Activated CD4-positive, alpha-beta T cell treated with anti-CD3 and anti-CD28 coated beads for 36 hours (primary cell): ENCODE measurements at regions of chr16 and their contacts with region 1.

Region 1: GRCh38 chr16:53743149-53743566 is 39.2 kb downstream of the FTO start:
- DNase-seq: peak; percentile 48
- ATAC-seq: no peak
- H3K4me3 Mint-ChIP-seq: no peak overlapping the region
- H3K27ac Mint-ChIP-seq: no peak overlapping the region
- H3K4me1 Mint-ChIP-seq: peaks cover 25% of the 10 kb centered on the region
- H3K27me3 Mint-ChIP-seq: no peaks in the 10 kb centered on the region

Region 2: GRCh38 chr16:53714205-53715022 is 28.7 kb before region 1 on chr16:
- CTCF ChIA-PET with region 1: no interaction called
- POLR2A ChIA-PET with region 1: no interaction called
- intact Hi-C with region 1: no loop called
- DNase-seq: no peak
- ATAC-seq: no peak
- H3K4me3 Mint-ChIP-seq: no peak overlapping the region
- H3K27ac Mint-ChIP-seq: no peak overlapping the region
- H3K4me1 Mint-ChIP-seq: peaks cover 26% of the 10 kb centered on the region
- H3K27me3 Mint-ChIP-seq: no peaks in the 10 kb centered on the region

Region 3: GRCh38 chr16:53773150-53773846 is 30.1 kb after region 1 on chr16:
- CTCF ChIA-PET with region 1: interaction called, 14 read pairs
- POLR2A ChIA-PET with region 1: no interaction called
- intact Hi-C with region 1: loop called in 1 of 2 experiments (anchors 1 kb)
- DNase-seq: no peak
- ATAC-seq: no peak
- H3K4me3 Mint-ChIP-seq: no peak overlapping the region
- H3K27ac Mint-ChIP-seq: no peak overlapping the region
- H3K4me1 Mint-ChIP-seq: peaks cover 30% of the 10 kb centered on the region
- H3K27me3 Mint-ChIP-seq: no peaks in the 10 kb centered on the region